Naive thymus-derived CD8-positive, alpha-beta T cell (primary cell): ENCODE measurements at regions of chr14 and their contacts with region 1.

Region 1: DNA sequence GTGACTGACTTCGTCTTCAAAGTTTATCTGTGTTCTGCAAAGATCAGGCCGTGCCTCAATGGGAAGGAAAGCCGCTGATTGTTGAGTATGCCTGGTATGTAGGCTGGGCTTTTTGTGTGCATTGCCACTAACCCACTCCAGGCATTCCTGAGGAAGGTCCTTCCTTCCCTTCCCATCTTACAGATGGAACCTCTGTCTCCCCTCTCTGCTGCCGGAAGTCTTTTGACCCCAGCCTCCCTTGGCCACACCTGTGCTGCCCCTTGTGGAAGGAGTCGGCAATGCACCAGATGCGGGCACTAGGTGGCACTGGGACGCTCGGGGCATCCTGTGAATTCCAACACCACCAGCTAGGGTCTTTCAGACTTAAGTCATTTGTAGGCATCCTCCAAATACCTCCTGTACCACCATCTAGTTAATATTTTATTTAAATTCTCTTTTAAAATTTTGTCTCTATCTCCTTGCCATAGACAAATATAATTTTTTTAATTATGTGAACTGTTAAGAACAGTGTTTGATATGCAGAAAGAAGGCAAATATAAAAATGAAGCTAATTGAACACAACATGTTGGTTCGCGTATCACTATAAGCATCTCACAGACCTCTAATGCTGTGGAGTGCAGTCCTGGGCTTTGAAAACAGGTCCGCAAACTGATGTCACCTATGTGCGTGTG is 99.5 kb downstream of the RIN3 start:
- DNase-seq: peak; percentile 47 to 87 (median 70)
- ATAC-seq: peak in 1 of 2 donors; percentile 29
- H3K4me3 Mint-ChIP-seq: peak overlapping the region in 5 of 10 donors; percentile 4 to 52 (median 20)
- H3K27ac Mint-ChIP-seq: peak overlapping the region; percentile 48 to 94 (median 72)
- H3K4me1 Mint-ChIP-seq: peaks cover 28 to 84% (median 72%) of the 10 kb centered on the region in 4 donors
- H3K27me3 Mint-ChIP-seq: no peaks in the 10 kb centered on the region

Region 2: GRCh38 chr14:92568621-92569479 is 44.3 kb before region 1 on chr14:
- POLR2A ChIA-PET with region 1: no interaction called
- DNase-seq: peak in 7 of 10 donors; percentile 21 to 66 (median 45)
- ATAC-seq: peak; percentile 84 to 87
- H3K4me3 Mint-ChIP-seq: peak overlapping the region; percentile 68 to 92 (median 86)
- H3K27ac Mint-ChIP-seq: peak overlapping the region; percentile 96 to 100 (median 99)
- H3K4me1 Mint-ChIP-seq: peaks cover 24 to 74% (median 69%) of the 10 kb centered on the region in 4 donors
- H3K27me3 Mint-ChIP-seq: no peaks in the 10 kb centered on the region

Region 3: DNA sequence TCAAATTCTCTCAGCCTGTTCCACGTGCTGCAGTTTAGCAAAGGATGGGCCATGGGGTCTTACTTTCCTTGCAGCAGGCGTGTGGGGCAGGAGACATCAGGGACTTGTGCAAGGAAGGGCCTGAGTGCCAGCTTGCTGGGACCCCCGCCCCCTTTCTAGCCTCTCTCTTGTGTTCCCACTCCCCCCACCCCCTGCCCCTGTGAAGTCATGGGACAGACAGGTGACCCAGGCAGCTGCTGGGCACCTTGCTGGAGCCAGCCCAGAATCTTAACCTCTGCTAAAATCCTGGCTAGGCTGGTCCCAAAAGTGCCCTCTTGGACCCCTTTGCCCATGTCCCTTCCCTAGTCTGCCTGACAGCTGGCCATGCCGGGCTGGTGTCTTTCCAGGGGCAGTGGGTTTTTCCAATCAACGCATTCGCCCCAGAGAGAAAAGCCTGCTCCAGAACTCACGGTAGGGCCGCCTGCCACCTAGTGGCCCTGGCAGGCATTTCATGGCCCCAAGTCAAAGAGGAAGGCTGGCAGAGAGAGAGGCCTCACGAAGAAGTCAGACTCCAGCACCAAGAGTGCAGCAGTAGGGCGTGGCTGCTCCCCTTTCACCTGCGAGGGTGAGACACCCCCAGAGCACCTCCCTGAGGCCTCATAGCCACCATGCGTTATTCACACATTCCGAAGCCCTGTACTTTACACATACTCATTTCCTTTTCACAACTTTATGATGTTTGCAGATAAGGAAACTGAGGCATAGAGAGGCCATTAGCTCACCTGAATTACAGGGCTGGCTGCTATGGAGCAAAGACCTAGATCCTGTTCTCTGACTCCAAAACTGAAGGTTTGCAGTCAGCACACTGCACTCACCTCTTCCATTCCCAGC is 67.9 kb after region 1 on chr14:
- POLR2A ChIA-PET with region 1: interaction called, 16 read pairs
- DNase-seq: peak; percentile 60 to 84 (median 74)
- ATAC-seq: peak; percentile 80
- H3K4me3 Mint-ChIP-seq: peak overlapping the region in 3 of 10 donors; percentile 28 to 43 (median 41)
- H3K27ac Mint-ChIP-seq: peak overlapping the region; percentile 83 to 94 (median 90)
- H3K4me1 Mint-ChIP-seq: peaks cover 19 to 52% (median 31%) of the 10 kb centered on the region in 4 donors
- H3K27me3 Mint-ChIP-seq: no peaks in the 10 kb centered on the region

Region 4: GRCh38 chr14:92696366-92696765 is 83.2 kb after region 1 on chr14:
- POLR2A ChIA-PET with region 1: no interaction called
- DNase-seq: peak in 1 of 10 donors; percentile 16
- ATAC-seq: no peak
- H3K4me3 Mint-ChIP-seq: peak overlapping the region in 1 of 10 donors; percentile 8
- H3K27ac Mint-ChIP-seq: peak overlapping the region in 8 of 10 donors; percentile 11 to 91 (median 58)
- H3K4me1 Mint-ChIP-seq: peaks cover 31 to 59% (median 53%) of the 10 kb centered on the region in 4 donors
- H3K27me3 Mint-ChIP-seq: no peaks in the 10 kb centered on the region